ENCODE measurements at regions of chr5 and their contacts with region 1.

Region 1: DNA sequence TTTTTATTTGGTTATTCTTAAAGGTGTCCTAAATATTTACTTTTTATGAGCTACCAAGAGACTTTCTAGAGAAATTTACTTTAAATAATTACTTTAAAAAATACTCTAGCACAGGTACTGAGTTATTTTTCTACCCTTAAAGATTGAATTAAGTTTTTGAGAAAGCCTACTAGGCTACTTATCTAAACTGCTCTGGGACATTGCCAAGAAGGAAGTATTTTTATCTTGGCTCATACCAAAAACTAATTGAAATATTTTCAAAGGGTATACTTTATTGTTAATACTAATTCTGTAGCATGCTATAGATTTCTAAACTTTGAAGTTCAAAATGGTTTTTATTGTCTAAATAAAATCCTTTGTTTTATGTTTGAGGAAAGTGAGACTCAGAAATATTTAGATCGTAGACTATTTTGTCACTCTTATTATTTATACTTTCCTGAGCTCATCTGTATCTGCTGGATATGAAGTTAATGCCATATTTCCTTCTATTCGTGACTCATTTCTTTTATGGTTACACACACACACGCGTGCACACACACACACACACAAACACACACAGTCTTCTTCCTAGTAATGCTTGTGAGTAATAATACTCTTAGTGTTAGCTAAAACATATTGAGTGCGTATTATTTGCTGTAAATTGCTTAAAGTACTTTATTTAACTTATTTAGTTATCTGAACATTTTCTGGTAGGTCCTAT is 89.5 kb downstream of the MAN2A1 start:
- DNase-seq: peak; percentile 85
- H3K4me3 ChIP-seq: peak overlapping the region in 1 of 3 experiments; percentile 40
- H3K27ac ChIP-seq: peak overlapping the region; percentile 60
- H3K4me1 ChIP-seq: peaks cover 21% of the 10 kb centered on the region
- H3K27me3 ChIP-seq: no peaks in the 10 kb centered on the region
- CTCF ChIP-seq: no peak
- POLR2A ChIP-seq: no peak

Region 2: DNA sequence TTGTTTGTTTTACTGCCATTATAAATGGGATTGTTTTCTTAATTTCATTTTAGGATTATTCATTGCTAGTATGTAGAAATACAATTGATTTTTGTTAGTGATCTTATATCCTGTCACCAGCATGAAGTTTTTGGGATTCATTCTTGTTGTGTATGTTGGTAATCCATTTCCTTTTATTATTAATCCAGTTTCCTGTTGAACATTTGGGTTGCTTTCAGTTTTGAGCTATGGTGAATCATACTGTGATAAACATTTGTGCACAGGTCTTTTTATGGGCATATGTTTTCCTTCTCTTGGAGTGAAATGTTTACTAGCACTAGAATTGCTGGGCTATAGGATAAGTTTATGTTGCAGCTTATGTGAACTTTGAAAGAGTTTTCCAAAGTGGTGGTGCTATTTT is 19.9 kb before region 1 on chr5:
- CTCF ChIA-PET with region 1: interaction called, 5 read pairs
- POLR2A ChIA-PET with region 1: no interaction called
- dilution Hi-C with region 1: no loop called
- intact Hi-C with region 1: loop called (anchors 1 kb)
- DNase-seq: peak; percentile 89
- H3K4me3 ChIP-seq: peak overlapping the region in 1 of 3 experiments; percentile 32
- H3K27ac ChIP-seq: peak overlapping the region; percentile 67
- H3K4me1 ChIP-seq: peaks cover 10% of the 10 kb centered on the region
- H3K27me3 ChIP-seq: no peaks in the 10 kb centered on the region
- CTCF ChIP-seq: no peak
- POLR2A ChIP-seq: no peak

Measured in endothelial cell of umbilical vein (primary cell).